Activated naive CD4-positive, alpha-beta T cell treated with anti-CD3 and anti-CD28 coated beads for 36 hours (primary cell): ENCODE measurements at regions of chr15 and their contacts with region 1.

Region 1: DNA sequence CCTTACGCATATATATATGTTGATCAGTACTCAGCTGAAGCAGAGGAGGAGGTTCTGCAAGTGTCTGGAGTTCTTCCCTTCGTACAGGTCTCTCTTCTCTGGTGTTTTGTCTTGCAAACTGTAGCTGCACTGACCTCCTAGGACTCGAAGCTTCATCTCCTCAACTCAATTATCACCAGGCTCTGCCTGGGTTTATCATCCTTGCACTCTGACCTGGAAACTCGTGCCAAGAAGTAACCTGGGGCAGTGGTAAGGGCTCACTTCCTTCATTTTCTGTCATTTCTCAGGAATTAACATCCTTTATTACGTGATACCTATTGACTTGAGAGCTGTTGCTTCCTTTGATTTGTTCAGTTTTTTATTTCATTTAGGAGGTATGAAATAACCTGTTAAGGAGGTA is 14.4 kb downstream of the REC114 start:
- DNase-seq: no peak
- H3K4me3 Mint-ChIP-seq: no peak overlapping the region
- H3K27ac Mint-ChIP-seq: no peak overlapping the region
- H3K4me1 Mint-ChIP-seq: no peaks in the 10 kb centered on the region
- H3K27me3 Mint-ChIP-seq: peaks cover 10% of the 10 kb centered on the region

Region 2: GRCh38 chr15:73403171-73403570 is 54.2 kb before region 1 on chr15:
- CTCF ChIA-PET with region 1: no interaction called
- intact Hi-C with region 1: no loop called
- DNase-seq: no peak
- H3K4me3 Mint-ChIP-seq: no peak overlapping the region
- H3K27ac Mint-ChIP-seq: no peak overlapping the region
- H3K4me1 Mint-ChIP-seq: no peaks in the 10 kb centered on the region
- H3K27me3 Mint-ChIP-seq: peaks cover 17% of the 10 kb centered on the region

Region 3: DNA sequence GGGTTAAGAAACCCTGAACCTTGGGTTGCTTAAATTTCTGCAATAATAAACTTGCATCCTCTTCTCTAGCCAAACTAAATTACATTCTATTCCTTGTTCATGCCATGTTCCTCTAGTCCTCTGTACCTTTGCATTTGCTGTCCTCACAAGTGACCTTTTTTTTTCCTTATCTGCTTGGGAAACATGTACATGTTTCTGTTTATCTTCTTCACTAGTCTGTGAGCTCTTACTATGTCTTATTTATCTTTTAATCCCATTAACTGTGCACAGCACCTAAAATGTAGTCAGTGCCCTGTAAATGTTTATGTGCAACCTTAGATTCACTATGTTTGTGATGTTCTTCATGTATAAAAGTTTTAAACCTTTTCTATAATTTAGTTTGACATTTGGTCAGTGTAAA is 47.6 kb after region 1 on chr15:
- CTCF ChIA-PET with region 1: no interaction called
- intact Hi-C with region 1: loop called (anchors 5 kb)
- DNase-seq: no peak
- H3K4me3 Mint-ChIP-seq: no peak overlapping the region
- H3K27ac Mint-ChIP-seq: no peak overlapping the region
- H3K4me1 Mint-ChIP-seq: no peaks in the 10 kb centered on the region
- H3K27me3 Mint-ChIP-seq: no peaks in the 10 kb centered on the region